ENCODE measurements at regions of chr10 and their contacts with region 1.

Region 1: DNA sequence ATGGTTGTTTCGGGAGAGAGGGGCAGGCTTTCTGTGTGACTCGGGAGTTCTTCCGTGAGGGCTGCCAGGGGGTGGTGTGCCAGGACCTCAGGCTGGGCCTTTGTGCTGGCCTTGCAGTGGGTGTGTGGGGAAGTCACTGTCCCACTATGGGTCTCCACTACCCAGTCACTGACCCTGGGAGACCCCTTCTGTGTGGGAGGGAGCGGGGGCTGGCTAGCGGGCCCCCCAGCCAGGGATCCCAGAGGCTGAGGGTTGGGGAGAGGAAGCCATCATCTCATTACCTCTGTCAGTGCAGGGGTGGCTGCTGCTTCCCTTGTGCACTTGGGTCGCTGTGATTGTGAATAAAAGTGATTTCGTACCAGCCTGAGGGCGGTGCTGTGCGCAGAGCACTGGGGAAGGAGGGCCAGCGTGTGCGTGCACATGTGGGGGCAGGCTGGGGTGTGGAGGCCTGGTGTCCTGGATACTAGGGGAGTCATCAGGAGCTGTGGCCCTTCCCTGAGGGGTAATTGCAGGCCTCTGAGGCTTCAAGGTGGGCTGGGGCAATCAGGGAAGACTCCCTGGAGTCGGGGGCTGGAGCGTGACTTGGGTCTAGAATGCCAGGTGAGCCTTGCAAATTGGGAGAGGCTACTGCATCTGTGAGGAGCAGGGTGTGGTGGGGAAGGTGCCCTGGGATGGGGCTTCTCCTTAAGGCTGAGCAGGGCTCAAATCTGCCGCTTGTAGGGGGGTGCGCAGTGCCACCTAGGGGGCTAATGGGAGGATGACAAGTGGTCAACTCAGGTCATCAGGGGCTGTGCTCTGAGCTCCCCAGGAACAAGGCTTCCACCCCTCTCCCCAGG is 98.9 kb downstream of the NEURL1 start:
- DNase-seq: peak; percentile 40 to 66 (median 56)
- H3K4me3 ChIP-seq: no peak overlapping the region
- H3K27ac ChIP-seq: no peak overlapping the region
- H3K4me1 ChIP-seq: no peaks in the 10 kb centered on the region
- H3K27me3 ChIP-seq: no peaks in the 10 kb centered on the region

Region 2: DNA sequence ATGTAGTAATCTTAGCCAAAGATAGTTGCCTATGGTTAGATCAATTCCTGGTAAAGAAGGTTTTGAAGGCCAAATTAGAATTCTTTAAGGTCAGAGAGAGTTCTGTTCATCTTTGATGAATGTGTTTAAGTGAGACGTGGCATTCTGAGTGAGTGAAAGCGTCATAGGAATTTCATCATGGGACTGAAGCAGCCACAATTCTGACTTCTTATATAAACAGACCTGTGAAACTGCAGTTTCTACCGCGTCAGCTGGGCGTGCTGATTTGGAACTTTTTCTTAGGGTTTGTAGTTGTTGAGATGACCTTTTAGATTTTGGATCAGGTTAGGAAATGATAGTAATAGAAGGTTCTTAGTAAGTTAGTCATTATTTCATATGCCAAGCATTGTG is 570.5 kb before region 1 on chr10:
- CTCF ChIA-PET with region 1: no interaction called
- POLR2A ChIA-PET with region 1: no interaction called
- DNase-seq: no peak
- H3K4me3 ChIP-seq: no peak overlapping the region
- H3K27ac ChIP-seq: no peak overlapping the region
- H3K4me1 ChIP-seq: no peaks in the 10 kb centered on the region
- H3K27me3 ChIP-seq: peaks cover 0 to 1% (median 0%) of the 10 kb centered on the region in 5 experiments

Region 3: DNA sequence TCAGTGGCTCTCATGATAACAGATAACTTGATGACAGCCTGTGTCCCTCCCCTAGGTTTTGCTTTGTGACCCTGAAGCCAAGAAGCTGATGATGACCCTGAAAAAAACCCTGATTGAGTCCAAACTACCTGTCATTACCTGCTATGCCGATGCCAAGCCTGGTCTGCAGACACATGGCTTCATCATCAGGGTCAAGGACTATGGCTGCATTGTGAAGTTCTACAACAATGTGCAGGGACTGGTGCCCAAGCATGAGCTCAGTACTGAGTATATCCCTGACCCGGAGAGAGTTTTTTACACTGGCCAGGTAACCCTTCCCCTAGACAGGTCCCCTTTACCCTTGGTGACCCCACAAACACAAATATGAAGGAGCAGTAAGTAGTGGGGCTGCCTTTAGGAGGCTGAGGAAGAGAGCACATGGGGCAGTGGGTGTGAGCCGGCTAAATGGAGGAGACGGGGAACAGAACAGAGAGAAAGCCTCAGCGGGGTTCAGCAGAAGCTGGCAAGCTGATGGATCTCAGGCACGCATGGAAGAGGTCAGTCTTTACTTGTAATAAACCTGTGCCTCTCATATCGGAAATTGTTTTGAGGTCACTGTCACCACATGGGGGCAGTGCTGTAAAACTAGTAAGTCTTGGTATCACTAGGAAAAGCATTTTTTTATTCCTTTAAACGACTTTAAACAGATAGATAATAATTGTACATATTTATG is 175.8 kb before region 1 on chr10:
- CTCF ChIA-PET with region 1: interaction called, 11 read pairs
- POLR2A ChIA-PET with region 1: no interaction called
- DNase-seq: peak; percentile 74 to 88 (median 78)
- H3K4me3 ChIP-seq: no peak overlapping the region
- H3K27ac ChIP-seq: no peak overlapping the region
- H3K4me1 ChIP-seq: no peaks in the 10 kb centered on the region
- H3K27me3 ChIP-seq: no peaks in the 10 kb centered on the region

Region 4: DNA sequence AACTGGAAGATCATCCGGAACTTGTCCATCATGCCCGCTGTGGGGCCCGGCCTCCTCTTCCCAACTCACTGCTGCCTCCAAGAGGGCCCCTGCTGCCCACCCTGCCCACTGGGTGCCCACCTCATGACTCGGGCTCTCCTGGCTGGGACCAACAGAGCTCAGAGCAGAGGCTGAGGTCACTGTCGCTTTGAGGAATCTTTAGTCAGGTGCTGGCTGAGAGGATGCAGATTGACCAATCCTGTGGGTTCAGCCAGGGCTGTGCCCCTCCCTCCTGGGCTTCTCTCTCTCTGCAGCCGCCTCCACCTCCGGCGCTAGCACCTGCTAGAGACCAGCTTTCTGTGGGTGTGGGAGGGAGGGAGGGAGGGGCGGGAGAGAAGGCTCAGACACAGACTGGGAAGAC is 133.7 kb before region 1 on chr10 and contains the start of gene CALHM1:
- CTCF ChIA-PET with region 1: no interaction called
- POLR2A ChIA-PET with region 1: no interaction called
- DNase-seq: peak in 1 of 3 donors; percentile 21
- H3K4me3 ChIP-seq: no peak within 1 kb of the TSS
- H3K27ac ChIP-seq: no peak within 1 kb of the TSS
- H3K4me1 ChIP-seq: peaks cover 0 to 21% (median 9%) of the 10 kb centered on the region in 4 experiments
- H3K27me3 ChIP-seq: no peaks in the 10 kb centered on the region

Region 5: DNA sequence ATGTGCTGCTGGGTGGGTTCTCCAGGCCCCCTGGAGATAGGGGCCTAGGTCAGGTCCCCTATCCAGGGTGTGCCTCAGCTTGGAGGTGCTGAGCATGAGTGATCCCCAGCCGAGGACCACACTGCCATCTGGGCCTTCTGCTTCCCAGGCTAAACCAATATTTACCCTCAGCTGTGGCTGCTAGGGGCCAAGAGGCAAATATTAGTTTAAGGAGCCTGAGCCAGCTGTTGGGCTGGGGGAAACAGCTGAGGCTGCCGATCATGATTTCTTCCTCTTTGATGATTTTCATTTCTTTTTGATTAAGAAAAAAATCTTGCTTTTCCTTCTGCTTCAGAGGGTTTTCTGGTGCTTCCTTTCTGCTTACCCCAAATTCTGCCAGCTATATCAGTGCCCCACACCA is 15.5 kb before region 1 on chr10:
- CTCF ChIA-PET with region 1: interaction called, 11 read pairs
- POLR2A ChIA-PET with region 1: no interaction called
- DNase-seq: peak in 2 of 3 donors; percentile 78 to 81
- H3K4me3 ChIP-seq: no peak overlapping the region
- H3K27ac ChIP-seq: no peak overlapping the region
- H3K4me1 ChIP-seq: peaks cover 0 to 23% (median 8%) of the 10 kb centered on the region in 4 experiments
- H3K27me3 ChIP-seq: peaks cover 0 to 1% (median 0%) of the 10 kb centered on the region in 5 experiments

Region 6: DNA sequence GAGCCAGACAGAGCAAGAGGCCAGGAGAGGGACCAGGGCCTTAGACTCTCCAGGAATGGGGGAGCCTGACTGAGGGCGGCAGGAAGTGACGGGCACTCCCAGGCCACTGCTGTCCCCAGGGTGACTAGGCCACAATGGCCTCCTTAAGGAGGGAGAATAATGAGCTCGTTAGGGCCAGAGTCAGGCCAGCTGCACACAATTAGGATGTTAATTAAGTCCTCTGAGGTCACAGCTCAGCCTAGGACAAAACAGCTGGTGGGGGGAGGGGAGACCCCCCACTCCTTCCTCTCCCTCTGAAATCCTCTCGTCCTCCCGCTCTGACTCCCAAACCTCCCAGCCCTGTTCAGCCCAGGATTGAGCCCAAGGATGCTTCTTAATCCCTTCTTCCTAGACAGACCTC is 44.1 kb after region 1 on chr10:
- CTCF ChIA-PET with region 1: no interaction called
- POLR2A ChIA-PET with region 1: no interaction called
- DNase-seq: no peak
- H3K4me3 ChIP-seq: no peak overlapping the region
- H3K27ac ChIP-seq: no peak overlapping the region
- H3K4me1 ChIP-seq: peaks cover 0 to 3% (median 0%) of the 10 kb centered on the region in 4 experiments
- H3K27me3 ChIP-seq: no peaks in the 10 kb centered on the region

Region 7: DNA sequence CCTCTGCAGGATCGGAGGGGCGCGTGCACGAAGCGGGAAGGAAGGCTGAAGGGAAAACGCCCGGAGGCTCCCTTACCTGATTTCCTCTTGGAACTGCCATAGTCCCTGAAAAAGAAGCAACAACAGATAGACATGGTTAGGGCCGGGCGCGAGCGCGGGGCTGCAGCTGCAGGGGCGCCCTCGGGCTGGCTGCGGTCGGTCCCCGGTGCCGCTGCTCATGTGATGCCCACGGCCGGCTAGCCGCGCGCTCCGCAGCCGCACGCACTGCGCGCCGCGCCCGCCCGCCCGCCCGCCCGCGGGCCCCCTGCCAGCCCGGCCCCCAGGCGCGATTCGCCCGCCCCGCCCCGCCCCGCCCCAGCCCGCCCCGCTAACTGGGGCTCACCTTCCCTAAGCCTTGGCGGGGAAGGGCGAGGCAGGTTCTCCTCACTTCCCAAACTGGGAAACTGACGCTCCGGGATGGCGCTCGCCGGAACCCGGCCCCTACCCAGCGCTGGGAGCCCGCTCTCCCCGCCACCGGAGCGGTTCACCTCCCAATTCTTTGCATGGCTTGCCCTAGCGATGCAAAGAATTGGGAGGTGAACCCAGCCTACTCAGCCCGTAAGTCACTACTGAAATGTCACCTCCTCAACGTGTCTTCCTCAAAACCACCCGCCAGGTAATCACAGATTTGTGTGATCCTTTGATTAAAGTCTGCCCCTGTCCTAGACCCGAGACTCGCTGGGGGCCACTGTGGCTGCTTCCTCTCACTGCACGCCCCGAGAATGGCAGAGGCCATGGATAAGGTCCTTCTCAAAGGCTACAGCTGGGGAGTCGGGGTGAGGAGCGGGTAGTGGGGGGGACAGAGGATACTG is 100.8 kb after region 1 on chr10:
- CTCF ChIA-PET with region 1: interaction called, 20 read pairs
- POLR2A ChIA-PET with region 1: no interaction called
- DNase-seq: peak; percentile 49 to 82 (median 79)
- H3K4me3 ChIP-seq: peak overlapping the region in 6 of 7 experiments; percentile 25 to 72 (median 50)
- H3K27ac ChIP-seq: no peak overlapping the region
- H3K4me1 ChIP-seq: peaks cover 0 to 35% (median 28%) of the 10 kb centered on the region in 4 experiments
- H3K27me3 ChIP-seq: peaks cover 0 to 33% (median 12%) of the 10 kb centered on the region in 5 experiments

Measured in common myeloid progenitor, CD34-positive (primary cell).